CD8-positive, alpha-beta T cell (primary cell): ENCODE measurements at regions of chr14 and their contacts with region 1.

Region 1: GRCh38 chr14:35404449-35405303 is at the start of gene NFKBIA:
- DNase-seq: peak; percentile 87 to 97 (median 93)
- ATAC-seq: peak; percentile 60
- H3K4me3 ChIP-seq: peak within 1 kb of the TSS; percentile 84 to 86
- H3K4me3 Mint-ChIP-seq: peak within 1 kb of the TSS; percentile 92
- H3K27ac ChIP-seq: peak within 1 kb of the TSS; percentile 93 to 95
- H3K27ac Mint-ChIP-seq: peak within 1 kb of the TSS; percentile 97
- H3K4me1 ChIP-seq: peaks cover 53% of the 10 kb centered on the region
- H3K4me1 Mint-ChIP-seq: peaks cover 52% of the 10 kb centered on the region
- H3K27me3 ChIP-seq: no peaks in the 10 kb centered on the region
- H3K27me3 Mint-ChIP-seq: no peaks in the 10 kb centered on the region
- CTCF ChIP-seq: no peak
- total RNA-seq, gene NFKBIA: 1,097 to 1,133 TPM

Region 2: DNA sequence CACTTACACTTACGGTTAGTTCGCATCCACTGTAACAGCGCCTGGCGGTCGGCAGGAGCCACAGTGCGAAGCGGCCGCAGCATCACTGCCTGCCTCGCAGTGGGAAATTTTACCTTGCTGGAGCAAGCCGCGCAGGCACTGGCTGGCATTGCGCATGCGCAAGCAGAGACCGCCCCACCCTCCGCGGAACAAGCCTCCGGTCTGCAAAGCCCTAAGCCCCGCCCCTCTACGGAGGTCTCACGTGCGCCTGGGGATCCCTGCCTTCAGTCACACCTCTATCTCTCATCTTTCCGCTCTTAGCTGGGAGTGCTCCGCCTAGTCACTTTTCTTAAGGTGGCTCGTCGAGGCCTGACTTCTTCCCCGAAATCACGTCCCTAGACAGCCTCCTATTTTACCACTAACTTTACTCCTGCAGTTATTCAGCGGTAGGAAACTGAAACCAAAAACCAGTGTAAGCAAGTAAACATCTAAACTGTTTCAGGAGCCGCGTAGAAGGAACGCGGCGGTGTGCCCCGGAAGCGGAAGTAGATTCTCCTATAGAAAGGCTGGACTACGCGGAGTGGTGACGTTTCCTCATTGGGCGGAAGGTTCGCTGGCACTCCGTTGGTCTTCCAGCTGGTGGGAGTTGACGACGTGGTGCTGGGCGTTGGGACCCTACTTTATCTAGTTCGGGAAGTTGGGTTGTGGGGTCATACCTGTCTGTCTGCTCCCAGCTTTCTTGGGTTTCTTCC is 422.1 kb before region 1 on chr14 and contains the start of gene SRP54:
- CTCF ChIA-PET with region 1: no interaction called
- POLR2A ChIA-PET with region 1: interaction called, 9 read pairs
- intact Hi-C with region 1: loop called (anchors 1 to 5 kb)
- DNase-seq: peak; percentile 99 to 100 (median 100)
- ATAC-seq: peak; percentile 93
- H3K4me3 ChIP-seq: peak within 1 kb of the TSS; percentile 82 to 87
- H3K4me3 Mint-ChIP-seq: no peak within 1 kb of the TSS
- H3K27ac ChIP-seq: peak within 1 kb of the TSS; percentile 92 to 96
- H3K27ac Mint-ChIP-seq: no peak within 1 kb of the TSS
- H3K4me1 ChIP-seq: peaks cover 34% of the 10 kb centered on the region
- H3K4me1 Mint-ChIP-seq: peaks cover 33% of the 10 kb centered on the region
- H3K27me3 ChIP-seq: no peaks in the 10 kb centered on the region
- H3K27me3 Mint-ChIP-seq: no peaks in the 10 kb centered on the region
- CTCF ChIP-seq: no peak
- total RNA-seq, gene SRP54: 40.4 to 42.4 TPM

Region 3: GRCh38 chr14:35088514-35088913 is 316.2 kb before region 1 on chr14:
- CTCF ChIA-PET with region 1: no interaction called
- POLR2A ChIA-PET with region 1: no interaction called
- intact Hi-C with region 1: no loop called
- DNase-seq: no peak
- ATAC-seq: no peak
- H3K4me3 ChIP-seq: no peak overlapping the region
- H3K4me3 Mint-ChIP-seq: no peak overlapping the region
- H3K27ac ChIP-seq: no peak overlapping the region
- H3K27ac Mint-ChIP-seq: no peak overlapping the region
- H3K4me1 ChIP-seq: no peaks in the 10 kb centered on the region
- H3K4me1 Mint-ChIP-seq: no peaks in the 10 kb centered on the region
- H3K27me3 ChIP-seq: no peaks in the 10 kb centered on the region
- H3K27me3 Mint-ChIP-seq: no peaks in the 10 kb centered on the region
- CTCF ChIP-seq: no peak

Region 4: GRCh38 chr14:35140718-35141581 is 263.7 kb before region 1 on chr14:
- CTCF ChIA-PET with region 1: interaction called, 382 read pairs
- POLR2A ChIA-PET with region 1: interaction called, 20 read pairs
- intact Hi-C with region 1: no loop called
- DNase-seq: peak in 2 of 9 experiments; percentile 40 to 44
- ATAC-seq: peak; percentile 67
- H3K4me3 ChIP-seq: no peak overlapping the region
- H3K4me3 Mint-ChIP-seq: no peak overlapping the region
- H3K27ac ChIP-seq: no peak overlapping the region
- H3K27ac Mint-ChIP-seq: peak overlapping the region; percentile 67
- H3K4me1 ChIP-seq: no peaks in the 10 kb centered on the region
- H3K4me1 Mint-ChIP-seq: peaks cover 19% of the 10 kb centered on the region
- H3K27me3 ChIP-seq: no peaks in the 10 kb centered on the region
- H3K27me3 Mint-ChIP-seq: no peaks in the 10 kb centered on the region
- CTCF ChIP-seq: peak; percentile 83

Region 5: DNA sequence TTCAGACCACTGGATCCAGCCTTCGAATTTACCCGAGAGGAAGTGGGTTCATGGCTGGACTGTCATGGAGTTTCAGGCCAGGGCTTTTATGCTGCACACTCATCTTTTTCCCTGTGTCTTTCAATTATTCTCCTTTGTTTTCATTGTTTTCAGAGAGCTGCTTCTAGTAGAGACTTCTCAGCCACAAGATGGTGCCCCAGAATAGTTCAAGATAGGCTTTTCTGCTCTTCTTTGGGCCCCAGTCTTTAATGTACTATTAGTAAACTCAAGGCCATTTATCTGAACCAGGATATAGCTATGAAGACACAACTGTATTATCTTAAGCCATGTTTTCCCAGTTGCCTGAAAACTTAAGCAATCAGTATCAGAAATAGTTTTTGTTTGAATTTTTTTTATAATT is 142.9 kb before region 1 on chr14:
- CTCF ChIA-PET with region 1: interaction called, 13 read pairs
- POLR2A ChIA-PET with region 1: interaction called, 11 read pairs
- intact Hi-C with region 1: loop called in 1 of 2 experiments (anchors 1 kb)
- DNase-seq: peak in 2 of 9 experiments; percentile 39 to 53
- ATAC-seq: no peak
- H3K4me3 ChIP-seq: no peak overlapping the region
- H3K4me3 Mint-ChIP-seq: no peak overlapping the region
- H3K27ac ChIP-seq: no peak overlapping the region
- H3K27ac Mint-ChIP-seq: peak overlapping the region; percentile 18
- H3K4me1 ChIP-seq: no peaks in the 10 kb centered on the region
- H3K4me1 Mint-ChIP-seq: no peaks in the 10 kb centered on the region
- H3K27me3 ChIP-seq: no peaks in the 10 kb centered on the region
- H3K27me3 Mint-ChIP-seq: no peaks in the 10 kb centered on the region
- CTCF ChIP-seq: no peak

Region 6: DNA sequence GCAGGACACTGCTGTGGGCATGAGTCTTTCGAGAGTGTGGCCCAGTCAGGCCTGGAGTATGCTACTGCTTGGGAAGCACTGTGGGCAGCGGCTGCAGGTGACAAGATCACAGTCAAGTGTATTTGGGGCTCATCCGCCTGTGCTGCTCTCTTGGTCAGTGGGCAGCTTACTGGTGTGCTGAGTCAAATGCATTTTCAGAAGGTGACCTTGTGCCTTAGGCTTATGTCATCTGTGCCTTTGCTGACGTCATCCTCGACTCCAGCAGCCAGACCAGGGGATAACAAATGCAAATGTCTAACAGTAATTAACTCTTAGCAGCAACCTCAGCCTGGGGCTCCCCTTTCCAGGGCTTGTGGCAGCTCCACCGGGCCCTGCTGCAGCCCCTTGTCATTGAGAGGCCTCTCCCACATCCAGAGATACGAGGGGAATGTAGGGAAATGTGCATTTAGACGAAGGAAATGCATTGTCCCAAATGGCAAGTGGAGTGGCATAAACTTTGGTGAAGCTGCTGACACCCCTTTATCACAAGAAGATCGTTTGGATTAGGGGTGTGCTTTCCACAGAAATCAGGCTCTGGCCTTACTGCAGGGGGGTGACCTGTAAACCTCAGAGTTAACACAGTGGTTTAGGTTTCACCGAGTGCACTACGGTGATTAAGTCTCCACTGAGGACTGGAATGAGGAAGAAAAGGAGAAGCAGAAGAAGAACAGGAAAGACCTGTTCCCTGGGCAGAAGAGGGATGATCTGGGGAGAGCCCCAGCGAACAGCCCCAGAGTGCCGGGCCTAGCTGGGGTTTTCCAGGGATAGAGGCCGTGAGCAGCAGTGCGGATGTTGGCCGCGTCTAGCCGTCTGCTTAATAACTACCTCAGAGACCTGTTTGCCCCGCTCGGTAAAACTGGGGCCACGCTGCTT is 72.8 kb before region 1 on chr14:
- CTCF ChIA-PET with region 1: interaction called, 8 read pairs
- POLR2A ChIA-PET with region 1: interaction called, 19 read pairs
- intact Hi-C with region 1: loop called (anchors 2 to 5 kb)
- DNase-seq: peak in 1 of 9 experiments; percentile 34
- ATAC-seq: no peak
- H3K4me3 ChIP-seq: no peak overlapping the region
- H3K4me3 Mint-ChIP-seq: no peak overlapping the region
- H3K27ac ChIP-seq: peak overlapping the region in 1 of 2 experiments; percentile 88
- H3K27ac Mint-ChIP-seq: peak overlapping the region; percentile 90
- H3K4me1 ChIP-seq: peaks cover 24% of the 10 kb centered on the region
- H3K4me1 Mint-ChIP-seq: peaks cover 30% of the 10 kb centered on the region
- H3K27me3 ChIP-seq: no peaks in the 10 kb centered on the region
- H3K27me3 Mint-ChIP-seq: no peaks in the 10 kb centered on the region
- CTCF ChIP-seq: no peak

Region 7: DNA sequence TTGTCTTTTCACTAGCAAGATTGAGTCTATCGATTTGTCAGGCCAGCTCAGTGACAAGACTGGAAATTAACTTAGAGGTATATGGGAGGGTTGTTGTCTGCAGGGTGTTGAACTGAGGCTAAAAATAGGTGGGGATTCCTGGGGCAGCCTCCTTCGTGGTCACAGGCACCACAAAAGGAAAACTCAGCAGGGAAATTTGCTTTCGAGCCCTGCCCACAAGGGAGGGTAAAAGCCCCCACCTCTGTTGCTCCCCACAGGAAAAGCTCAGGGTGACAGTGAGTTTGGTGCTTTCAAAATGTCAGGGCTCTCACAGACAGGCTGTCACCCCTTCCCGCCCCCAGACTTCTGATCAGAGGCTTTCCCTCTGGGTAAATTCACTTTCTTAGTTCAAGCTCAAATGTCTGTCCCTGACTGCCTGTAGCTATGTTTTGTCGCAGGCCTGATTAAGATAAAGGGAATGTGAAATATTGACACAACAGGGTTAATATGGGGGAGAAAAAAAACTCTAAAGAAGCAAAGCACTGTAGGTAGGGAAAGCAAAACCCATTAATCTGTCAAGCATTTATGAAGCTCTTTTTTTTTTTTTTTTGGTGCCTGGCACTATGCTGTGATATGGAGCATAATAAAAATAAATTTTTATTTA is 11.6 kb after region 1 on chr14:
- CTCF ChIA-PET with region 1: interaction called, 88 read pairs
- POLR2A ChIA-PET with region 1: interaction called, 92 read pairs
- intact Hi-C with region 1: loop called (anchors 1 kb)
- DNase-seq: peak in 8 of 9 experiments; percentile 35 to 94 (median 62)
- ATAC-seq: peak; percentile 48
- H3K4me3 ChIP-seq: peak overlapping the region; percentile 9 to 15
- H3K4me3 Mint-ChIP-seq: peak overlapping the region; percentile 55
- H3K27ac ChIP-seq: peak overlapping the region; percentile 17 to 85
- H3K27ac Mint-ChIP-seq: peak overlapping the region; percentile 90
- H3K4me1 ChIP-seq: peaks cover 35% of the 10 kb centered on the region
- H3K4me1 Mint-ChIP-seq: peaks cover 44% of the 10 kb centered on the region
- H3K27me3 ChIP-seq: no peaks in the 10 kb centered on the region
- H3K27me3 Mint-ChIP-seq: no peaks in the 10 kb centered on the region
- CTCF ChIP-seq: no peak

Region 8: DNA sequence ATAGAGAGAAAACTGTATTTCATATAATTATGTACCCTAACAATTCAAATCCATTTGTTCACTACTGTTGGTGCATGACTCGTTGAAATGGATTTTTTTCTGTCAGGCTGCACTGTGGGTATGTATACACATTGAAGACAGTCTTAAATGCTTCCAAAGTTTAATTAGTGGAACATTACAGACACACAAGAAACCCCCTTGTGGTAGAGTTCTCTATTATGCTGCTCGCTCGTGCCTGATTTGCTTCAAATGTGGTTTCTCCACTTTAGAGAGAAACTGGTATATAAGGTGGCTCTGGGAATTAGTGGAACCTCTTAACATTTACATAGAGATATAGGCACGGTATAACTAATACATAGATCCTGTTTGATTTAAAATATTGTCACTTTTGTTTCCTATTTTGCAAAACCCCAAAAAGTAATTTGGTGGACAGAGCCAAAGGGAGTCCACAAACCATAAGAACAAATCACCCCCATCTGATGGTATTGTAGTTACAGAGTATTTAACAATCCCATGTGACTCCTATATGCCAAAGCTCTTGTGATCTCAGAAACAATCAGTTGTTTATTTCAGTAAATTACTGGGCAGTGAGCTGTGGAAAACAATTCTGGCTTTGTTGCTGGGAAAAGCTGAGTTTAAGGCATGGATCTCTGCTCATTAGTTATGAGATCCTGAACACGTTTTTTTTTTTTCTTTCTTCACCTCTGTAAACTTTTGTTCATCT is 581.0 kb after region 1 on chr14:
- CTCF ChIA-PET with region 1: no interaction called
- POLR2A ChIA-PET with region 1: no interaction called
- intact Hi-C with region 1: no loop called
- DNase-seq: peak in 1 of 9 experiments; percentile 4
- ATAC-seq: no peak
- H3K4me3 ChIP-seq: no peak overlapping the region
- H3K4me3 Mint-ChIP-seq: no peak overlapping the region
- H3K27ac ChIP-seq: no peak overlapping the region
- H3K27ac Mint-ChIP-seq: no peak overlapping the region
- H3K4me1 ChIP-seq: peaks cover 5% of the 10 kb centered on the region
- H3K4me1 Mint-ChIP-seq: peaks cover 9% of the 10 kb centered on the region
- H3K27me3 ChIP-seq: no peaks in the 10 kb centered on the region
- H3K27me3 Mint-ChIP-seq: no peaks in the 10 kb centered on the region
- CTCF ChIP-seq: no peak

Region 9: GRCh38 chr14:37023875-37024565 is 1619.3 kb after region 1 on chr14:
- CTCF ChIA-PET with region 1: no interaction called
- POLR2A ChIA-PET with region 1: no interaction called
- intact Hi-C with region 1: no loop called
- DNase-seq: no peak
- ATAC-seq: no peak
- H3K4me3 ChIP-seq: no peak overlapping the region
- H3K4me3 Mint-ChIP-seq: no peak overlapping the region
- H3K27ac ChIP-seq: no peak overlapping the region
- H3K27ac Mint-ChIP-seq: no peak overlapping the region
- H3K4me1 ChIP-seq: no peaks in the 10 kb centered on the region
- H3K4me1 Mint-ChIP-seq: no peaks in the 10 kb centered on the region
- H3K27me3 ChIP-seq: no peaks in the 10 kb centered on the region
- H3K27me3 Mint-ChIP-seq: no peaks in the 10 kb centered on the region
- CTCF ChIP-seq: no peak